Cardiac septum (tissue), 1 donor: ENCODE measurements at regions of chr20 and their contacts with region 1.

Region 1: GRCh38 chr20:18507218-18508021 is at the start of gene SEC23B:
- DNase-seq: peak; percentile 98
- total RNA-seq, gene SEC23B: 15.4 TPM

Region 2: GRCh38 chr20:18287915-18288748 is 219.3 kb before region 1 on chr20 and contains the start of gene ZNF133:
- intact Hi-C with region 1: loop called (anchors 5 kb)
- DNase-seq: peak; percentile 98
- total RNA-seq, gene ZNF133: 6.0 TPM

Region 3: GRCh38 chr20:18466894-18467730 is 40.3 kb before region 1 on chr20 and contains the starts of genes DZANK1 and POLR3F:
- intact Hi-C with region 1: loop called (anchors 2 kb)
- DNase-seq: peak; percentile 97
- total RNA-seq, gene DZANK1: 0.38 TPM
- total RNA-seq, gene POLR3F: 7.2 TPM

Region 4: DNA sequence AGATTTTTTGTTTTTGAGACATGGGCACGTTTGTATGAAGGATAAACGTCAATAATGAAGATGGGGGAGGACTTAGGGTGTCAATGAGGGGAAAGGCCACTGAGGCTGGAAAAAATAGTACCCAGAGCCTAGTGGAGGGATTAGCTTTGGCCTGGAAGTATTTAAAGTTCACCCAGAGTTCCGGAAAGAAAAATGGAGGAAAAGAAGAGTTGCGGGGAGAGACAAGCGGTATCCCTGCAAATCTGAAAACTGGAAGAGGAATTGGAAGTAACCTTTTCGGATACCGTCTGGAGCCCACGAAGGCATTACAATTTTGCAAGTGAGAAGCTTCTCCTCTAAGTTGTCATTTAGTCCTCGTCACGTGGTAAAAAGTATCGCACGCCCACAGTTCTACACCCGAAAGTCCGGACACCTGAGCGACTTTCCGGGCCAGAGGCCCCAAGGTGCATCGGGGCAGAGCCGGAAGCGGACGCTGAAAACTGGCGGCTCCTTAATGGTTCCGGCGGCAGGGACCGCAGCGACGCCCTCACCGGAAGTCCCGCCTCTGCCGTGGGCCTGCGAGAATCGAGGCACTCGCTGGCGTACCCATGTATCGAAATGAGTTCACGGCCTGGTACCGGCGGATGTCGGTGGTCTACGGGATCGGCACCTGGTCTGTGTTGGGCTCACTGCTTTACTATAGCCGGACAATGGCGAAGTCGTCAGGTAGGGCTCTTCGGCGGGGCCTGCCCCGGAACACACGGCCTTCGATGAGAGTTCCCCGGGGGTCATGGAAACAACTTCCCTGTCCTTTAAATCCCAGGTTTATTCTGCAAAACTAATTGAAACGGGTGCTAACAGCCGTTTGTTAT is 59.7 kb after region 1 on chr20 and contains the start of gene SMIM26:
- intact Hi-C with region 1: loop called (anchors 5 kb)
- DNase-seq: peak; percentile 97
- total RNA-seq, gene SMIM26: 84.4 TPM